AG04449 (cell line): ENCODE measurements at regions of chr10 and their contacts with region 1.

Region 1: DNA sequence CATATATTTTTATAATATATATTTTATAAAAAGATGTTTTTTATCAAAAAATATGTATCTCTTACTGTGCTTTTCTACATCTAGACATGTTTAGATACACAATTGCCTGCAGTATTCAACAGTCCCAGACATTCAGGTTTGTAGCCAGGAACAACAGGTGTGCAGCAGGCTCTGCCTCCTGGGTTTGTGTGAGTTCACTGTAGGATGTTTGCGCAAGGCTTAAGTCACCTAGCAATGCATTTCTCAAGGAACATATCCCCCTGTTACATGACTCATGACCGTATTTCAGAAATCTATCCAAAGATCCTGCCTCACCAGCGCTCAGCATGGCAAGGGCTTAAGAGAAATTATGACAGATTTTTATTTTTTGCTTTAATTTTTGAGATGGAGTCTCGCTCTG is 41.5 kb downstream of the PITRM1 start:
- DNase-seq: no peak
- H3K4me3 ChIP-seq: no peak overlapping the region
- CTCF ChIP-seq: no peak

Region 2: DNA sequence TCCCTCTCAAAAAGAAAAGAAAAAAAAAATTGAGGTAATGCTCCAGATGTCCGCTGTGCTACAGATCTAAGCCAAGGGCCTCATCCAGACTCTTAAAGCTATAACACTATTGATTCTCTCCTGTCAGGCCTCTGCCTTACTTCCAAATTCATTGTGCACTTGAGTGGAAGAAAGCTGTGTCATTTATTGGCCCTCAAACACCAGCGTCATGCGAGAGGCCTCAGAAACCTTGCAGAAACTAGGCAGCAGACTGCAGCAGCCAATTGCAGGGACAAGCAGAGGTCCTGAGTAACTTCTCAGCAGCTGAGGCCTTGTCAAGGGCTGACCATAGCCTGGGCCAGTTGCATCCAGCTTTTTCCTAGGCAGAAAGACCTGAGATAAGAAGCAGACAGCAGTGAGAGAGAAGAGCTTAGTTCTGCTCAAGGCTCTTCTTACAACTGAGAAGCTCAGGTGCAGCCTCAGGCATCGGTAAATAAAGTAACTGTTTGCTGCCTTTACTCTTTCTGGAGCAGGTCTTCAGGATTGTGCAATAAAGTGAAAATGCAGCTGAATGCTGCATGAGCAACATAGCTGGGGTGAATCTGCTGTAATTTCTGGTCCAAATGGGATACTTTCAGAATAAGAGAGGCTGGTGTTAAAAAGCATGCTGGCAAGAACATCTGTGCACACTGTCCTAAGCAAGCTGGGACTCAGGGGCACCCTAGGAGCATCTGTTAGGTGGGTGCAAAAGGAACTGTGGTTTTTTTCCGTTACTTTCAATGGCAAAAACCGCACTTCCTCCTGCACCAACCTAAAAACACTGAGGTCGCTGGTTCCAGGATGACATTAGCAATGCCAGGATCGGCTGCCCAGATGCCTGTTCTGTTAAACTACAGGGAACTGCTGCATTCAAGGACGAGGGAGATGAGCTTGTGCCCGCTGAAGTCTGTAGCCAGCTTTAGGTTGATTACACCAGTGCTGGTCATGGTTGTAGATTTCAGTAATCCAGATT is 245.5 kb before region 1 on chr10:
- CTCF ChIA-PET with region 1: no interaction called
- POLR2A ChIA-PET with region 1: no interaction called
- DNase-seq: no peak
- H3K4me3 ChIP-seq: no peak overlapping the region
- CTCF ChIP-seq: no peak

Region 3: DNA sequence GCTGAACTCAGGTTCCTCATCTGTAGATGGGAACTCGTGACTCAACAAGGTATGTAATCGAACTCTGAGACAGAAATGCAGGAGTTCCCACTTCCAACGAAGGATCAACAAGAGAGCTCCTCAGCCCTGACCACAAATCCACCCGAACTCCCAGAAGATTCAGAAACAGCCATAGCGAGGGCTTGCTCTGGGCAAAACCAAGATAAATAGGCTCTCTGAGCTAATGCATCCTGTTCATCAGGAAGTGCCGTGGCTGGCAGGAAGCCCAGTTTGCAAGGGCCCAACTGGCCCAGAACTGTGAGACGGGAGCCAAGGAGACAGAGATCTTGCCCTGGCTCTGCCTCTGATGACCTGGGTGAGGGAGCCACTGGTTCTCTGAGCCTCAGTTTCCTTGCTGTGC is 205.5 kb before region 1 on chr10:
- CTCF ChIA-PET with region 1: no interaction called
- POLR2A ChIA-PET with region 1: no interaction called
- DNase-seq: peak; percentile 2
- H3K4me3 ChIP-seq: no peak overlapping the region
- CTCF ChIP-seq: no peak

Region 4: GRCh38 chr10:3036155-3037021 is 94.7 kb before region 1 on chr10:
- CTCF ChIA-PET with region 1: no interaction called
- POLR2A ChIA-PET with region 1: no interaction called
- DNase-seq: no peak
- H3K4me3 ChIP-seq: no peak overlapping the region
- CTCF ChIP-seq: no peak

Region 5: GRCh38 chr10:3119796-3120459 is 11.2 kb before region 1 on chr10:
- CTCF ChIA-PET with region 1: interaction called, 15 read pairs
- POLR2A ChIA-PET with region 1: no interaction called
- DNase-seq: no peak
- H3K4me3 ChIP-seq: no peak overlapping the region
- CTCF ChIP-seq: peak; percentile 51